IMR-90 (cell line): ENCODE measurements at regions of chr10 and their contacts with region 1.

Region 1: DNA sequence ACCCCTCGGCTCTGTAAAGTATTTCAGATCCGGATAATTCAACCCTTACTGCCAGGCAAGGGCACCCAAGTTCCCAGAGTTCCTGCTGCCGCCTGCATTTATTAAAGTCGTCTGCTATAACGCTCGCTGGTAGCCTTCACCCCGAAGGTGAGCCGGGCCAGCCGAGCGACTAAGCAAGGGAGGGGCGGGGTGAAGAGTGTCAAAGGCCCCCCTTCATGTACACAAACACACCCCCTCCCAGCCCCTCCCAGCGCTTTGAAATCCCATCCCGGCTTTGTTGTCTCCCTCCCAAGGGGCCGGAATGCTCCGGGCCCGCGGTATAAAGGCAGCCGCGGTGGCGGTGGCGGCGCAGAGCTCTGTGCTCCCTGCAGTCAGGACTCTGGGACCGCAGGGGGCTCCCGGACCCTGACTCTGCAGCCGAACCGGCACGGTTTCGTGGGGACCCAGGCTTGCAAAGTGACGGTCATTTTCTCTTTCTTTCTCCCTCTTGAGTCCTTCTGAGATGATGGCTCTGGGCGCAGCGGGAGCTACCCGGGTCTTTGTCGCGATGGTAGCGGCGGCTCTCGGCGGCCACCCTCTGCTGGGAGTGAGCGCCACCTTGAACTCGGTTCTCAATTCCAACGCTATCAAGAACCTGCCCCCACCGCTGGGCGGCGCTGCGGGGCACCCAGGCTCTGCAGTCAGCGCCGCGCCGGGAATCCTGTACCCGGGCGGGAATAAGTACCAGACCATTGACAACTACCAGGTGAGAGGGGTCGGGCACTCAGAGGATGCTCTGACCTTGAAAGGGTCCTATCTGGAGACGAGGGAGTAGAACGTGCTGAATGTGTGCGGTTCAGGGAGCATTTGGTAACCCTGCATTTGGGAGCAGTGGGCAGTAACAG is at the start of gene DKK1:
- DNase-seq: peak; percentile 76
- ATAC-seq: peak; percentile 75
- H3K4me3 ChIP-seq: peak within 1 kb of the TSS; percentile 81
- H3K27ac ChIP-seq: peak within 1 kb of the TSS; percentile 83
- H3K4me1 ChIP-seq: peaks cover 4% of the 10 kb centered on the region; the same call in 1 of the 2 replicates
- H3K27me3 ChIP-seq: no peaks in the 10 kb centered on the region
- CTCF ChIP-seq: peak; percentile 89
- POLR2A ChIP-seq: peak; percentile 85
- RAD21 ChIP-seq: peak; percentile 79
- total RNA-seq, gene DKK1: 74.7 and 116 TPM in 2 replicates

Region 2: GRCh38 chr10:52443419-52444388 is 129.5 kb after region 1 on chr10:
- CTCF ChIA-PET with region 1: no interaction called
- POLR2A ChIA-PET with region 1: no interaction called
- dilution Hi-C with region 1: no loop called
- in situ Hi-C with region 1: no loop called
- intact Hi-C with region 1: loop called (anchors 5 kb)
- DNase-seq: peak; percentile 87
- ATAC-seq: peak; percentile 84
- H3K4me3 ChIP-seq: no peak overlapping the region
- H3K27ac ChIP-seq: peak overlapping the region; percentile 73
- H3K4me1 ChIP-seq: peaks cover 11% of the 10 kb centered on the region
- H3K27me3 ChIP-seq: no peaks in the 10 kb centered on the region
- CTCF ChIP-seq: no peak
- POLR2A ChIP-seq: no peak
- RAD21 ChIP-seq: no peak

Region 3: GRCh38 chr10:52566471-52567246 is 252.5 kb after region 1 on chr10:
- CTCF ChIA-PET with region 1: interaction called, 16 read pairs
- POLR2A ChIA-PET with region 1: interaction called, 4 read pairs
- dilution Hi-C with region 1: no loop called
- in situ Hi-C with region 1: loop called (anchors 5 kb)
- intact Hi-C with region 1: loop called (anchors 1 kb)
- DNase-seq: peak; percentile 69
- ATAC-seq: peak; percentile 78
- H3K4me3 ChIP-seq: no peak overlapping the region; the same call in 1 of the 2 replicates
- H3K27ac ChIP-seq: no peak overlapping the region
- H3K4me1 ChIP-seq: peaks cover 3% of the 10 kb centered on the region
- H3K27me3 ChIP-seq: no peaks in the 10 kb centered on the region
- CTCF ChIP-seq: peak; percentile 89
- POLR2A ChIP-seq: no peak
- RAD21 ChIP-seq: peak; percentile 84